ENCODE measurements at regions of chr10 and their contacts with region 1.

Region 1: GRCh38 chr10:59625721-59626522 is 83.7 kb downstream of the SLC16A9 start:
- DNase-seq: peak; percentile 71
- CTCF ChIP-seq: peak; percentile 87

Region 2: DNA sequence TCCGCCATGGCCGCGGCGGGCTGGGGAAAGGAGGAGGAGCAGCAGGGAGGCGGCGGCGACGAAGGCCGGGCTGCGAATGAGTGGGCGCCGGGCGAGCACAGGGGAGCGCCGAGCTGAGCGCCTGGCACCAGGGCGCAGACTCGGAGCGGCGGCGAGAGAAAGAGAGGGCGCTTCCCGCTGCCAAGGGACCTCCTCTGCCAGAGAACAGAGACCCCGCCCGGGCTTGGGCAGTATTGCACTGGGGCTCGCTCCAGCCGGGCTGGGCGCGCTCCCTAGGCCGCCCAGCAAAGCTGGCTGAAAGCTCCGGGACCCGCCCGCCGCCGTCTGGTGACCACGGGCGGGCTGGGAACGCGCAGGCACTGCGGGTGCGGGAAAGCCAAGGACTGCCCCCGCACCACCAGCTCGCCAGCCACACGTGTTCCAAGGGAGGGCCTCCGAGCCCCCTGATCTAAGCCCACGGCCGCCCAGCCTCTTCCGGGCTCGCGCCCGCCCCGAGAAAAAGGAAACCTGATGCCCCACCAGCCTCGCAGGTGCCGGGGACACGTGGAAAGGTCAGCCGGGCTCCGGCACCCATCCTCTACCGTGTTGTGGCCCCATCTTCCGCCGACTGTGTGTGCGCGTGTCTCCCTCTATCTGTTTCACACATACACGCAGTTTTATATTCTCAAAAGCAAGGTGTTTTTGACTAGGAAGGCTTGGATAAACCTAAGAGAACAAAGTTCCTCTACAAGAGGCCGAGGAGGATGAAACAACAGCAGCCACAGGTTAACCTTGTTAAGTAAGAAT is 280.7 kb after region 1 on chr10 and contains the start of gene CCDC6:
- in situ Hi-C with region 1: loop called (anchors 25 kb)
- DNase-seq: peak; percentile 90
- CTCF ChIP-seq: peak; percentile 81

Region 3: GRCh38 chr10:59991661-59992060 is 365.7 kb after region 1 on chr10:
- in situ Hi-C with region 1: no loop called
- DNase-seq: no peak
- CTCF ChIP-seq: no peak

Region 4: DNA sequence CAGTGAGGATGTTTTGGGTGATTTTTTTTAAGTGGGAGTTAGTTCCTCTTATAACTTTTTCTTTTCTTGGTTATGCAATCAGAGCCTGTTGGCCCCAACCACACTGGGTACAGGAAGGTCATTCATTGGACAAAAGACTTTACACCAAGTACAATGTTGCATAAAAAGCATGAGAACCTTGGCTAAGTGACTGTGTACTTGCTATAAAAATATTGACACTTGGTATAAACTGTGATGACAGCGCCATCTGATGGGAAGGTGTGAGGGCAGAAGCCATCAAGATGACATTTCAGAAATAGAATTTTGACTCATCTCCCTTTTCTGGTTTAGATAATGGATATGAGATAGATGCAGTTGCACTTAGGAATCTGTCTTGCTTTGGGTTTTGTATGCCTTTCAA is 406.8 kb after region 1 on chr10:
- in situ Hi-C with region 1: loop called (anchors 25 kb)
- DNase-seq: peak; percentile 61
- CTCF ChIP-seq: peak; percentile 71

Region 5: DNA sequence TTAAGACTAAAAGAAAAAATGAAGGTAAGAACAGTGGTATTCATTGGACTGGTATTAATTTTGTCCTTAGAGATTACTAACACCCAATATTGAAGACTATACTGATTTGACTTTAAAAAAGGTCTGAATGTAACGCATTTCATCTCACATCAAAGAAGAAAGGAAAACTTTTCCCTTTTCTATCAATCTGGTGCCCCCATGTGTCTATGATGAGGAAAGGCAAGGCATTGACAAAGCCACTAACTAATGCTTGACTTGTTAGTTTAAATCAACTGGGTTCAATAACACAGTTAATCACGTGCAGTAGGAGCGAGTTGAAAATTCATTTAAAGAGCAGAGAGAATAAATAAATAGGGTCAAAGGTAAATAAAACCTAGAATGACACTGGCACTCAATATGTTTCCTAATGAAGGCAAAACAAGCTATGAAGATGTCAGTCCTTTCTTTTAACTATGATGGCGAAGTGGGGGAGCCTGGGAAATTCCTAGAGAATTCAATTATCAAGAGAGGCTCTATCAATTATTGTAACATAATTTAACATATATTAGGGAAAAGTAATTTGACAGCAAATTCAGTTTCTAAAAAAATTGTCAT is 582.9 kb after region 1 on chr10:
- in situ Hi-C with region 1: loop called (anchors 25 kb)
- DNase-seq: no peak
- CTCF ChIP-seq: peak; percentile 73

Measured in GM13977 (cell line).